ENCODE measurements at regions of chr5 and their contacts with region 1.

Region 1: GRCh38 chr5:126811515-126812198 is 34.7 kb downstream of the LMNB1 start:
- DNase-seq: peak; percentile 50
- H3K4me3 Mint-ChIP-seq: peak overlapping the region; percentile 81
- H3K27ac Mint-ChIP-seq: peak overlapping the region; percentile 90
- H3K4me1 Mint-ChIP-seq: peaks cover 69% of the 10 kb centered on the region
- H3K27me3 Mint-ChIP-seq: no peaks in the 10 kb centered on the region

Region 2: DNA sequence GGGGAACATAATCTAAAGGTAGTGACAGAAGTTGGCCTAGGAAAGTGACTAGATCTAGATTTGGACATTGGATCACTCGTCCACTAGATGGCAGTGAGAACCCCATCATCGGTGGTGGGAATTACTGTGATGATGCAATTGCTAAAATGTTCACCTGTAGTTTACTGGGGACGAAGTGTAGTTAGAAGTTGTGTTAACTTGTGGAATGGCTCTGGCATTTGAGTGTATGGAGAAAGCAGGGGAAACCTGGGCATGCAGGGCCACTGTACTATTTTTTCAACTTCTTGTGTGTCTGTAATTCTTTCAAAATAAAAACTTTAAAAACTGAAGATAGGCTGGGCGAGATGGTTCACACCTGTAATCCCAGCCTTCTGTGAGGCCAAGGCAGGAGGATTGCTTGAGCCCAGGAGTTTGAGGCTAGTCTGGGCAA is 135.4 kb before region 1 on chr5:
- intact Hi-C with region 1: loop called (anchors 1 kb)
- DNase-seq: peak; percentile 52
- H3K4me3 Mint-ChIP-seq: no peak overlapping the region
- H3K27ac Mint-ChIP-seq: peak overlapping the region; percentile 8
- H3K4me1 Mint-ChIP-seq: peaks cover 6% of the 10 kb centered on the region
- H3K27me3 Mint-ChIP-seq: peaks cover 3% of the 10 kb centered on the region

Region 3: DNA sequence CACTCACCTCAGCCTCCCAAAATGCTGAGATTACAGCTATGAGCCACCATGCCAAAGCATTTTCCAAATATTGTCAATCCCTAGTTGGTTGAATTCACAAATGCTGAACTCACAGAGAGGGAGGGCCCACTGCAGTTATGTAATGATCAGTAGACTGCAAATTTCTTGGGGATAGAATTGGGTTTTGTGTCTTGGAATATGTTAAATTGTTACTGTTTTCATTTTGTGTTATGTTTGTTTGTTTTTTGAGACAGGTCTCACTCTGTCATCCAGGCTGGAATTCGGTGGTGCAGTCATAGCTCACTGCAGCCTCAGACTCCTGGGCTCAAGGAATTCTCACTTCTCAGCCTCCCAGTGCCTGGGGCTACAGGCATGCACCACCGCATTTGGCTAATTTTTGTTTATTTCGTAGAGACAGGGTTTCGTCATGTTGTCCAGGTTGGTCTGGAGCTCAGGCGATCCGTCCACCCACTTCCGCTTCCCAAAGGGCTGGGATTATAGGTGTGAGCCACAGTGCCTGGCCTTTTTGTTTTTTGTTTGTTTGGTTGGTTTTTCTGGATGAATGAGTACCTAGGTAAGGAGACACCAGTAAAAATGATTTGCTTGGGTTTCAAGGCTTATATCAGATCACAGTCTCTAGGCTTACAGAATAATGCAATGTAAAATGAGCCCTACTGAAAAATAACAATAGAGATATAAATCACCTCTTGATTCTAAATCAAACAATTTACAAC is 66.2 kb before region 1 on chr5:
- intact Hi-C with region 1: loop called (anchors 2 kb)
- DNase-seq: no peak
- H3K4me3 Mint-ChIP-seq: no peak overlapping the region
- H3K27ac Mint-ChIP-seq: peak overlapping the region; percentile 40
- H3K4me1 Mint-ChIP-seq: peaks cover 60% of the 10 kb centered on the region
- H3K27me3 Mint-ChIP-seq: peaks cover 1% of the 10 kb centered on the region

Region 4: GRCh38 chr5:126852091-126852571 is 40.5 kb after region 1 on chr5:
- intact Hi-C with region 1: loop called (anchors 2 kb)
- DNase-seq: peak; percentile 28
- H3K4me3 Mint-ChIP-seq: peak overlapping the region; percentile 80
- H3K27ac Mint-ChIP-seq: peak overlapping the region; percentile 87
- H3K4me1 Mint-ChIP-seq: peaks cover 43% of the 10 kb centered on the region
- H3K27me3 Mint-ChIP-seq: no peaks in the 10 kb centered on the region

Measured in activated T-helper 1 cell treated with anti-CD3 and anti-CD28 coated beads, Interleukin-12 subunit alpha, Interleukin-12 subunit beta, Interleukin-2, Interleukin-4 antibody, amounts not matched to agents 30 ng/mL and 10 ng/mL and 1 ng/mL, durations not matched to agents 14 hours and 24 hours and 36 hours (primary cell).